ENCODE measurements at regions of chr22 and their contacts with region 1.

Region 1: DNA sequence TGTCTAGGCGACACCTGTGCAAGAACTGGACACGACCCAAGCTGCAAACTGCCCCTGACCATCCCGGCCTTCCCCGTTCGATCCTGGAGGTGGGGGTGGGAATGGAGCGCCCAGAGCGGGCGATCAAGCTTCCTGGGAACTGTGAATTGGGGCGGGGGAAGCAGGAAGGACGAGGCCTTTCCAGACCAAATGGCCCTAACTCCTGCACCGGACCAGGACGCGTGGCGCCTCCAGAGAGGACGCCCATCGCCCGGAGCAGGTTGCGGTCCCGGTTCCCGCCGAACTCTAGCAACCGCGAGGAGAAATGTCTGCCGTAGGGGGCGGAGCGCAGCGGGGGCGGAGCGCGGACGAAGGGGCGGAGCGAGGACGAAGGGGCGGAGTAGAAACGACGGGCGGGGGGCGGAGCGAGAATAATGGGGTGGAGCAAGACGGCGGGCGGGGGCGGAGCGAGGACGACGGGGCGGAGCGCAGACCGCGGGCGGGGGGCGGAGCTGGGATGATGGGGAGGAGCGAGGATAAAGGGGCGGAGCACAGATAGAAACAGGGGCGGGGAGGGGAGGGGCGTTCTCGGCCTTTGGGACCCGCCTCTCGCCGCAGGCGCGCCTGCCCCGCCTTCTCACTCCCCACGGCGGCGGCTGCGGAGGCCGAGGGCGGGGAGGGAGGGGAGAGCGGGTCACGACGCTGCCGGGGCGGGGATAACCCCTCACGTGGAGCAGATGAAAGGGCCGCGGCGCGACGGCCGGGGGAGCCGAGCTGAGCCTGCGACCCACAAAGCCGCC is at the start of gene ZNRF3:
- DNase-seq: peak; percentile 62 to 81
- H3K4me3 ChIP-seq: peak within 1 kb of the TSS; percentile 88
- H3K27ac ChIP-seq: no peak within 1 kb of the TSS
- H3K4me1 ChIP-seq: peaks cover 28% of the 10 kb centered on the region
- H3K27me3 ChIP-seq: no peaks in the 10 kb centered on the region
- CTCF ChIP-seq: no peak
- total RNA-seq, gene ZNRF3: 5.2 TPM in 2 replicates

Region 2: GRCh38 chr22:28172892-28173670 is 710.0 kb before region 1 on chr22:
- CTCF ChIA-PET with region 1: no interaction called
- POLR2A ChIA-PET with region 1: interaction called, 11 read pairs
- intact Hi-C with region 1: no loop called
- DNase-seq: peak; percentile 8 to 92
- H3K4me3 ChIP-seq: no peak overlapping the region
- H3K27ac ChIP-seq: no peak overlapping the region
- H3K4me1 ChIP-seq: peaks cover 9% of the 10 kb centered on the region; the same call in 1 of the 2 replicates
- H3K27me3 ChIP-seq: no peaks in the 10 kb centered on the region
- CTCF ChIP-seq: no peak

Region 3: GRCh38 chr22:28911777-28912669 is 29.0 kb after region 1 on chr22:
- CTCF ChIA-PET with region 1: no interaction called
- POLR2A ChIA-PET with region 1: interaction called, 11 read pairs
- intact Hi-C with region 1: no loop called
- DNase-seq: peak in 1 of 2 experiments; percentile 62
- H3K4me3 ChIP-seq: no peak overlapping the region
- H3K27ac ChIP-seq: peak overlapping the region; percentile 44
- H3K4me1 ChIP-seq: peaks cover 14% of the 10 kb centered on the region
- H3K27me3 ChIP-seq: no peaks in the 10 kb centered on the region
- CTCF ChIP-seq: no peak

Region 4: GRCh38 chr22:29031227-29032011 is 148.4 kb after region 1 on chr22:
- CTCF ChIA-PET with region 1: interaction called, 4 read pairs
- POLR2A ChIA-PET with region 1: interaction called, 3 read pairs
- intact Hi-C with region 1: loop called (anchors 1 kb)
- DNase-seq: peak; percentile 60 to 90
- H3K4me3 ChIP-seq: peak overlapping the region; percentile 74
- H3K27ac ChIP-seq: peak overlapping the region; percentile 93
- H3K4me1 ChIP-seq: peaks cover 46% of the 10 kb centered on the region
- H3K27me3 ChIP-seq: no peaks in the 10 kb centered on the region
- CTCF ChIP-seq: no peak

Measured in PC-9 (cell line).